ENCODE measurements at regions of chr2 and their contacts with region 1.

Region 1: GRCh38 chr2:174465327-174465726 is 21.5 kb downstream of the GPR155 start:
- DNase-seq: peak in 2 of 4 experiments; percentile 14 to 15
- ATAC-seq: peak; percentile 67
- H3K4me3 ChIP-seq: no peak overlapping the region
- H3K27ac ChIP-seq: no peak overlapping the region
- H3K4me1 ChIP-seq: no peaks in the 10 kb centered on the region
- H3K27me3 ChIP-seq: peaks cover 8 to 9% of the 10 kb centered on the region in 2 experiments
- CTCF ChIP-seq: peak; percentile 12 to 32 (median 15); a peak in 1 of 6 replicates
- EP300 ChIP-seq: no peak
- POLR2A ChIP-seq: no peak
- RAD21 ChIP-seq: peak; percentile 35 to 61

Region 2: DNA sequence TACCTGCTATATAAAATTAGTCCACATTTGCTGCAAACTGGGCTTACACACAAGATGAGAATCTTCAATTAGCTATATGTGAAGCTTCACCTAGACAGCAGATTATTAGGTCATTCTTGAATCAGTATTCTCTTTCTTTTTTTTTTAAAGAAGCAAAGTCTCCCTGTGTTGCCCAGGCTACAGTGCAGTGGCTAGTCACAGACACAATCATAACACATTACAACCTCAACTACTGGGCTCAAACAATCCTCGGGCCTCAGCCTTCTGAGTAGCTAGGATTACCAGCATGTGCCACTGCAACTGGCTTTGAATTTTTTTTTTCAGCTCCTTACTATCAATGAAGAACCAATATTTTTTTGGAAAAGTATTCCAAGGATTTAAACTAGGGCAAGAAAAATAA is 247.5 kb before region 1 on chr2:
- CTCF ChIA-PET with region 1: no interaction called
- POLR2A ChIA-PET with region 1: no interaction called
- in situ Hi-C with region 1: no loop called
- intact Hi-C with region 1: no loop called
- DNase-seq: no peak
- ATAC-seq: peak; percentile 53
- H3K4me3 ChIP-seq: no peak overlapping the region
- H3K27ac ChIP-seq: no peak overlapping the region
- H3K4me1 ChIP-seq: peaks cover 5 to 18% of the 10 kb centered on the region in 2 experiments; a peak in 4 of 5 replicates
- H3K27me3 ChIP-seq: no peaks in the 10 kb centered on the region
- CTCF ChIP-seq: no peak
- EP300 ChIP-seq: no peak
- POLR2A ChIP-seq: no peak
- RAD21 ChIP-seq: no peak

Region 3: GRCh38 chr2:174536304-174536703 is 71.0 kb after region 1 on chr2:
- CTCF ChIA-PET with region 1: no interaction called
- POLR2A ChIA-PET with region 1: no interaction called
- in situ Hi-C with region 1: loop called (anchors 5 kb)
- intact Hi-C with region 1: no loop called
- DNase-seq: peak in 1 of 4 experiments; percentile 12
- ATAC-seq: peak; percentile 42
- H3K4me3 ChIP-seq: no peak overlapping the region
- H3K27ac ChIP-seq: no peak overlapping the region
- H3K4me1 ChIP-seq: no peaks in the 10 kb centered on the region
- H3K27me3 ChIP-seq: peaks cover 40 to 41% of the 10 kb centered on the region in 2 experiments
- CTCF ChIP-seq: no peak
- EP300 ChIP-seq: no peak
- POLR2A ChIP-seq: no peak
- RAD21 ChIP-seq: no peak

Region 4: GRCh38 chr2:174603280-174603679 is 138.0 kb after region 1 on chr2:
- CTCF ChIA-PET with region 1: interaction called, 11 read pairs
- POLR2A ChIA-PET with region 1: no interaction called
- in situ Hi-C with region 1: no loop called
- intact Hi-C with region 1: loop called (anchors 1 kb)
- DNase-seq: peak in 2 of 4 experiments; percentile 42 to 62
- ATAC-seq: peak; percentile 94
- H3K4me3 ChIP-seq: no peak overlapping the region
- H3K27ac ChIP-seq: no peak overlapping the region
- H3K4me1 ChIP-seq: no peaks in the 10 kb centered on the region; a peak in 1 of 5 replicates
- H3K27me3 ChIP-seq: no peaks in the 10 kb centered on the region; a peak in 2 of 5 replicates
- CTCF ChIP-seq: peak; percentile 45 to 74 (median 64)
- EP300 ChIP-seq: no peak; the same call in 1 of the 2 replicates
- POLR2A ChIP-seq: no peak
- RAD21 ChIP-seq: peak; percentile 66 to 81

Region 5: DNA sequence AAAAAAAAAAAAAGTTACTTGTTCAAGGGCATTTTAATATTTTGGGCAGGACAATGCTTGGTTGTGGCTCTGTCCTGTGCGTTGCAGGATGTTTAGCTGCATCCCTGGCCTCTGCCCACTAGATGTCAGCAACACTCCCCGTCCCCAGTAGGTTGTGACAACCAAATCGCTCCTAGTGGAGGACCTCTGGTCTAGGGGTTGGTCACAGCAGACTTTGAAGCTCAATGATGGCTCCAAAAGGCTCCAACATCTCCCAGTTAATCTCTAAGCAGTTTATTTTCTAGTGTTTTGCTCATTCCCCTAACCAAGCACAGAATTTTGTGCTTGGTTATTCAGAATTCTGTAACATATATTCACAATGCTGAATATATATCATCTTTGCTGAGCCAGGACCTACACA is 231.9 kb after region 1 on chr2:
- CTCF ChIA-PET with region 1: no interaction called
- POLR2A ChIA-PET with region 1: no interaction called
- in situ Hi-C with region 1: loop called (anchors 10 kb)
- intact Hi-C with region 1: no loop called
- DNase-seq: peak; percentile 62 to 78 (median 66)
- ATAC-seq: peak; percentile 99
- H3K4me3 ChIP-seq: no peak overlapping the region
- H3K27ac ChIP-seq: no peak overlapping the region
- H3K4me1 ChIP-seq: no peaks in the 10 kb centered on the region
- H3K27me3 ChIP-seq: peaks cover 0 to 25% of the 10 kb centered on the region in 2 experiments; a peak in 2 of 5 replicates
- CTCF ChIP-seq: peak; percentile 87 to 97 (median 89)
- EP300 ChIP-seq: no peak
- POLR2A ChIP-seq: no peak
- RAD21 ChIP-seq: peak; percentile 50 to 66

Measured in K562 (cell line).